Sciatic nerve (tissue), 2 donors: ENCODE measurements at regions of chr7 and their contacts with region 1.

Region 1: GRCh38 chr7:132311733-132312132 is 264.5 kb downstream of the PLXNA4 start:
- DNase-seq: no peak
- ATAC-seq: no peak

Region 2: GRCh38 chr7:132381742-132382472 is 70.2 kb after region 1 on chr7:
- intact Hi-C with region 1: loop called (anchors 2 kb)
- DNase-seq: no peak
- ATAC-seq: no peak

Region 3: GRCh38 chr7:132654150-132654549 is 342.4 kb after region 1 on chr7:
- intact Hi-C with region 1: no loop called
- DNase-seq: no peak
- ATAC-seq: no peak